ENCODE measurements at regions of chr4 and their contacts with region 1.

Region 1: GRCh38 chr4:17356926-17357325 is 155.0 kb downstream of the QDPR start:
- DNase-seq: no peak
- H3K4me3 ChIP-seq: no peak overlapping the region
- H3K27ac ChIP-seq: no peak overlapping the region
- H3K4me1 ChIP-seq: no peaks in the 10 kb centered on the region
- H3K27me3 ChIP-seq: no peaks in the 10 kb centered on the region
- CTCF ChIP-seq: no peak

Region 2: DNA sequence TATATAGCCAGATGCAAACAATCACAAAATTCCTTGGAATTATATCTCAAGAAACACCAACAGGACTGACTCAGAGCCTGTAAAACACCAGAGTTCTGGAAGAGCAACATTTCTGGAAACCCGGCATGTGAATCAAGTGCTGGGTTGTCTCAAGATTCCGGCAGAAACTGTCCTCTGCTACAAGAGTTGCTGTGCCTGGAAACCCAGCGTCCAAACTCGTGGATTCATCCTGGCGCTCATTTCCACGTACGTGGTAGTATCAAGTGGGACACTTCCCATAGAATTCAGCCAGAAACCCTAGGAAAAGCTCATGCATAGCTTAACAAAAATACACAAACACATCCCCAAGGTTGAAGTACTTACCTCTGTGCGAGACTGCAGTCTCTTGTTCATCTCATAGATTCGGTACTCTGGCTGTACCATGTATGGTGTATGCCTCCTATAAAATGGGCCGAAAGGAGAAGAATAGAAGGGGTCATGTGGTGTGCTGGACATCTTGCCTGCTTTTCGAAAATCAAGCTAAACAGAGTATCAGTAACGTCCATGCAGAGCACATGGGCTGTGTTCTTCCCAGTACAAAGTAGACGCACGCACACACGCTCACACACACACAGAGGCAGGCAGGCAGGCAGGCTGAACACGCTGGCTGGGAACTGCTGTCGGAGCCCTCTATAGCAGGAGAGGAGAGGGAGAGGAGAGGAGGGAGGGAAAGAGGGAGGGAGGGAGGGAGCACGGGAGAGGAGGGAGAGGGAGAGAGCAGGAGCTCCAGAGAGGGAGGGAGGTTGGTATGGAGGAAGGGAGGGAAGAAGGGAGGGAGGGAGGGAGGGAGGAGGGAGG is 458.7 kb before region 1 on chr4 and contains the start of gene LDB2:
- intact Hi-C with region 1: no loop called
- DNase-seq: peak; percentile 66 to 80
- H3K4me3 ChIP-seq: peak within 1 kb of the TSS; percentile 47 to 50
- H3K27ac ChIP-seq: peak within 1 kb of the TSS; percentile 31 to 44
- H3K4me1 ChIP-seq: peaks cover 0 to 8% (median 3%) of the 10 kb centered on the region in 4 donors
- H3K27me3 ChIP-seq: no peaks in the 10 kb centered on the region
- CTCF ChIP-seq: no peak

Region 3: DNA sequence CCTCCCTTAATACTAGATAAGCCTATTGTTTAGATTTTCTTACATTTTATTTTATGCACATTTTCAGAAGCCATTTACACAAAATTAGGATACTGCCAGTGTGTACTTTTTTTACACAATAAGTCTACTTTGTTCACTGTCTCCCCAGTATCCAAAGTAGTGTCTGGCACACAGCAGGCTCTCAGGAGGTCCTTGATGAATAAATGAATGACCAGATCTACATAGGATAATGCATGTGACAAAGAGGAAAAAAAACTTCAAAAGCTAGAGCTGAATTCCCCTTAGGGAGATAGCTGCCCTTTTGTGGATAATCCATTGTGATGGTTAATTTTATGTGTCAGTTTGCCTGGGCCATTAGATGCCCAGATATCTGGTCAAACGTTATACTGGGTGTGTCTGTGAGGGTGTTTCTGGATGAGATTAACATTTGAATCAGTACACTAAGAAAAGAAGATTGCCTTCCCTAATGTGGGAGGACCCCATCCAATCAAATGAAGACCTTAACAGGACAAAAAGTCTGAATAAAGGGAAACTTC is 93.4 kb after region 1 on chr4:
- intact Hi-C with region 1: loop called (anchors 10 kb)
- DNase-seq: no peak
- H3K4me3 ChIP-seq: no peak overlapping the region
- H3K27ac ChIP-seq: no peak overlapping the region
- H3K4me1 ChIP-seq: peaks cover 0 to 20% (median 4%) of the 10 kb centered on the region in 4 donors
- H3K27me3 ChIP-seq: no peaks in the 10 kb centered on the region
- CTCF ChIP-seq: no peak

Region 4: GRCh38 chr4:18540349-18540748 is 1183.4 kb after region 1 on chr4:
- intact Hi-C with region 1: no loop called
- DNase-seq: no peak
- H3K4me3 ChIP-seq: no peak overlapping the region
- H3K27ac ChIP-seq: no peak overlapping the region
- H3K4me1 ChIP-seq: no peaks in the 10 kb centered on the region
- H3K27me3 ChIP-seq: no peaks in the 10 kb centered on the region
- CTCF ChIP-seq: no peak